B cell (primary cell): ENCODE measurements at regions of chr1 and their contacts with region 1.

Region 1: GRCh38 chr1:206912445-206913095 is 9.2 kb downstream of the FCMR start:
- DNase-seq: peak; percentile 84
- ATAC-seq: peak; percentile 62
- H3K4me3 ChIP-seq: peak overlapping the region in 4 of 5 experiments; percentile 8 to 32 (median 18)
- H3K4me3 Mint-ChIP-seq: no peak overlapping the region
- H3K27ac ChIP-seq: peak overlapping the region; percentile 30 to 88
- H3K27ac Mint-ChIP-seq: peak overlapping the region; percentile 87
- H3K4me1 ChIP-seq: peaks cover 97 to 99% of the 10 kb centered on the region in 2 donors
- H3K4me1 Mint-ChIP-seq: peaks cover 94% of the 10 kb centered on the region
- H3K27me3 ChIP-seq: no peaks in the 10 kb centered on the region
- H3K27me3 Mint-ChIP-seq: no peaks in the 10 kb centered on the region
- CTCF ChIP-seq: peak; percentile 86

Region 2: GRCh38 chr1:206469933-206470691 is 442.5 kb before region 1 on chr1 and contains the start of gene IKBKE:
- CTCF ChIA-PET with region 1: no interaction called
- POLR2A ChIA-PET with region 1: no interaction called
- intact Hi-C with region 1: loop called (anchors 10 kb)
- DNase-seq: peak; percentile 77
- ATAC-seq: peak; percentile 65
- H3K4me3 ChIP-seq: peak within 1 kb of the TSS; percentile 62 to 97 (median 85)
- H3K4me3 Mint-ChIP-seq: peak within 1 kb of the TSS; percentile 88
- H3K27ac ChIP-seq: peak within 1 kb of the TSS; percentile 63 to 75
- H3K27ac Mint-ChIP-seq: peak within 1 kb of the TSS; percentile 85
- H3K4me1 ChIP-seq: peaks cover 63 to 74% of the 10 kb centered on the region in 2 donors
- H3K4me1 Mint-ChIP-seq: peaks cover 73% of the 10 kb centered on the region
- H3K27me3 ChIP-seq: no peaks in the 10 kb centered on the region
- H3K27me3 Mint-ChIP-seq: no peaks in the 10 kb centered on the region
- CTCF ChIP-seq: peak; percentile 30
- total RNA-seq, gene IKBKE: 40.5 and 40.8 TPM in 2 replicates

Region 3: GRCh38 chr1:206725109-206725963 is 187.2 kb before region 1 on chr1:
- CTCF ChIA-PET with region 1: interaction called, 97 read pairs
- POLR2A ChIA-PET with region 1: no interaction called
- intact Hi-C with region 1: loop called (anchors 1 kb)
- DNase-seq: peak; percentile 68
- ATAC-seq: peak; percentile 46
- H3K4me3 ChIP-seq: no peak overlapping the region
- H3K4me3 Mint-ChIP-seq: peak overlapping the region; percentile 18
- H3K27ac ChIP-seq: no peak overlapping the region
- H3K27ac Mint-ChIP-seq: peak overlapping the region; percentile 65
- H3K4me1 ChIP-seq: peaks cover 32 to 33% of the 10 kb centered on the region in 2 donors
- H3K4me1 Mint-ChIP-seq: peaks cover 60% of the 10 kb centered on the region
- H3K27me3 ChIP-seq: no peaks in the 10 kb centered on the region
- H3K27me3 Mint-ChIP-seq: no peaks in the 10 kb centered on the region
- CTCF ChIP-seq: peak; percentile 28

Region 4: GRCh38 chr1:206808615-206809014 is 104.0 kb before region 1 on chr1:
- CTCF ChIA-PET with region 1: interaction called, 64 read pairs
- POLR2A ChIA-PET with region 1: interaction called, 5 read pairs
- intact Hi-C with region 1: loop called (anchors 1 kb)
- DNase-seq: peak; percentile 62
- ATAC-seq: peak; percentile 81
- H3K4me3 ChIP-seq: no peak overlapping the region
- H3K4me3 Mint-ChIP-seq: no peak overlapping the region
- H3K27ac ChIP-seq: no peak overlapping the region
- H3K27ac Mint-ChIP-seq: no peak overlapping the region
- H3K4me1 ChIP-seq: peaks cover 8 to 12% of the 10 kb centered on the region in 2 donors
- H3K4me1 Mint-ChIP-seq: peaks cover 27% of the 10 kb centered on the region
- H3K27me3 ChIP-seq: no peaks in the 10 kb centered on the region
- H3K27me3 Mint-ChIP-seq: no peaks in the 10 kb centered on the region
- CTCF ChIP-seq: peak; percentile 50

Region 5: GRCh38 chr1:206856674-206857464 is 55.7 kb before region 1 on chr1:
- CTCF ChIA-PET with region 1: interaction called, 16 read pairs
- POLR2A ChIA-PET with region 1: no interaction called
- intact Hi-C with region 1: no loop called
- DNase-seq: peak; percentile 43
- ATAC-seq: peak; percentile 61
- H3K4me3 ChIP-seq: no peak overlapping the region
- H3K4me3 Mint-ChIP-seq: no peak overlapping the region
- H3K27ac ChIP-seq: no peak overlapping the region
- H3K27ac Mint-ChIP-seq: no peak overlapping the region
- H3K4me1 ChIP-seq: no peaks in the 10 kb centered on the region
- H3K4me1 Mint-ChIP-seq: peaks cover 4% of the 10 kb centered on the region
- H3K27me3 ChIP-seq: peaks cover 0 to 4% (median 0%) of the 10 kb centered on the region in 4 experiments
- H3K27me3 Mint-ChIP-seq: peaks cover 18% of the 10 kb centered on the region
- CTCF ChIP-seq: peak; percentile 61

Region 6: DNA sequence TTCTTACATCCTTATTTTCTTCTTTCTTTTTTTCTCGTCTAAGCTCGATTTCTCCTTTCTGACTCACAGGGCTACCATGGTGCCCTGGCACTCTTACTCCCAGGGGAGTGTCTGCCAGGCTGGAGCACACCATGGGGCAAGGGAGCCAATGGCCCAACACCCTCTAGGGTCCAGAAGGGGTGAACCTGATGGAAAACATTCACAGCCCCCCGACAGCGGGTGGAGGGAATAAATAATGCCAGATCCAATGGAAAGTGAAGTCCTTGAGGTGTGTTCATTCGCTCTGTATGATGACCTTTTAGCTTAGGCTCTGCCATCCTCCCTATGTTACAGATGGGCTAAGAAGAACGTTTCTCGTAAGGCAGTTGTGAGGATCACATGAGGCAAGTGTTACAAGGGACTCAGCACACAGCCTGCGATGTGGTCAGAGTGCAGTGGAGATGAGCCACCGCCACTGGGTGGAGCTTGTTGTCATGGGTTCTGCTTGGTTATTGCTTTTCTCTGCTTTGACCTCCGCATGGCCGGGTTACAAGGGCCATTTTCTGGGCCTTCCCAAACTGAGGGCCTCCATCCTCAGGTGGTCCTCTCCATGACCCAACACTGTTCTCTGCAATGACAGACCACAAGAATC is 12.7 kb after region 1 on chr1:
- CTCF ChIA-PET with region 1: interaction called, 723 read pairs
- POLR2A ChIA-PET with region 1: interaction called, 69 read pairs
- intact Hi-C with region 1: loop called (anchors 1 kb)
- DNase-seq: peak; percentile 84
- ATAC-seq: peak; percentile 53
- H3K4me3 ChIP-seq: peak overlapping the region in 1 of 5 experiments; percentile 17
- H3K4me3 Mint-ChIP-seq: no peak overlapping the region
- H3K27ac ChIP-seq: peak overlapping the region; percentile 88 to 96
- H3K27ac Mint-ChIP-seq: no peak overlapping the region
- H3K4me1 ChIP-seq: peaks cover 82 to 84% of the 10 kb centered on the region in 2 donors
- H3K4me1 Mint-ChIP-seq: peaks cover 37% of the 10 kb centered on the region
- H3K27me3 ChIP-seq: no peaks in the 10 kb centered on the region
- H3K27me3 Mint-ChIP-seq: no peaks in the 10 kb centered on the region
- CTCF ChIP-seq: peak; percentile 19

Region 7: GRCh38 chr1:206941858-206942387 is 29.4 kb after region 1 on chr1:
- CTCF ChIA-PET with region 1: interaction called, 723 read pairs
- POLR2A ChIA-PET with region 1: no interaction called
- intact Hi-C with region 1: no loop called
- DNase-seq: no peak
- ATAC-seq: no peak
- H3K4me3 ChIP-seq: no peak overlapping the region
- H3K4me3 Mint-ChIP-seq: no peak overlapping the region
- H3K27ac ChIP-seq: no peak overlapping the region
- H3K27ac Mint-ChIP-seq: no peak overlapping the region
- H3K4me1 ChIP-seq: no peaks in the 10 kb centered on the region
- H3K4me1 Mint-ChIP-seq: no peaks in the 10 kb centered on the region
- H3K27me3 ChIP-seq: peaks cover 0 to 5% (median 2%) of the 10 kb centered on the region in 4 experiments
- H3K27me3 Mint-ChIP-seq: peaks cover 8% of the 10 kb centered on the region
- CTCF ChIP-seq: no peak

Region 8: GRCh38 chr1:207321079-207321789 is 408.7 kb after region 1 on chr1 and contains the start of gene CD55:
- CTCF ChIA-PET with region 1: no interaction called
- POLR2A ChIA-PET with region 1: no interaction called
- intact Hi-C with region 1: no loop called
- DNase-seq: peak; percentile 100
- ATAC-seq: peak; percentile 86
- H3K4me3 ChIP-seq: peak within 1 kb of the TSS; percentile 83 to 100 (median 91)
- H3K4me3 Mint-ChIP-seq: peak within 1 kb of the TSS; percentile 98
- H3K27ac ChIP-seq: peak within 1 kb of the TSS; percentile 98
- H3K27ac Mint-ChIP-seq: peak within 1 kb of the TSS; percentile 100
- H3K4me1 ChIP-seq: peaks cover 38 to 43% of the 10 kb centered on the region in 2 donors
- H3K4me1 Mint-ChIP-seq: peaks cover 56% of the 10 kb centered on the region
- H3K27me3 ChIP-seq: no peaks in the 10 kb centered on the region
- H3K27me3 Mint-ChIP-seq: no peaks in the 10 kb centered on the region
- CTCF ChIP-seq: peak; percentile 43
- total RNA-seq, gene CD55: 239 and 252 TPM in 2 replicates